ENCODE measurements at regions of chr10 and their contacts with region 1.

Region 1: DNA sequence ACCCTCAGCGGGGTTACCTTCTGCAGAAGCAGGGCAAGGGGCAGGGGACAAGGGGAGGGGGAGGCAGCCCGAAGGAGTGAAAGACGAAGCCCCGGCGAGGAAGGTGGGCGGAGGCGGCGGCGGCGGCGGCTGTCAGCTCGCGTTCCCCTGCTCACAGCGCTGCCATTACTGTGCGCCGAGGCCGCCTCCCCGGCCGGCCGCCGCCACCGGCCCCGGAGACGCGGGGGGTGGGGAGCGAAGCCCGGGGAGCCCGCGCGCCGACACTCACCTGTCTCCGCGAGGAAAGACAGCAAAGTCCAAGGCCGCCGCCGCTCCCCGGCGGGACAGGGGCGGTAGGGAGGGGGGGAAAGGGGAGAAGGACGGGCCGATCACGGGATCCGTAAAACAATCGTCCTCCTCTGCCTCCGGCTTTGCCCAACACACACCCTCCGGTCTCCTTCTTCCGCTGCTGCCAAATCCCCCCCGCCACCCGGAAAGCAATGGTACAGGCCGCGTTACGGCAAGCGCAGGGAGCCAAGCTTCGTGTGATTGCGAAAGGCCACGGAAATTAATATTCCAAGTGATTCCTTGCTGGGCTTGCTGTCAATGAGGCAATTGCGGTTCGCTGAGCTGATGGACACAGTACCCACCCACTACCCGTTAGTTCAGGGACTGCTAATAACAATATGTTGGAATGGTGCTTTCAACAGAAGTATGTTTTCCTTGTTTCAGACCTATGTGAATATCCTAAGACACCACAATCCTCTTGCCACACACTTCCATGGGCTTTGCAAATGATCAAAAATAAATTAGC is at the start of gene CUL2:
- DNase-seq: peak; percentile 94
- CTCF ChIP-seq: no peak

Region 2: DNA sequence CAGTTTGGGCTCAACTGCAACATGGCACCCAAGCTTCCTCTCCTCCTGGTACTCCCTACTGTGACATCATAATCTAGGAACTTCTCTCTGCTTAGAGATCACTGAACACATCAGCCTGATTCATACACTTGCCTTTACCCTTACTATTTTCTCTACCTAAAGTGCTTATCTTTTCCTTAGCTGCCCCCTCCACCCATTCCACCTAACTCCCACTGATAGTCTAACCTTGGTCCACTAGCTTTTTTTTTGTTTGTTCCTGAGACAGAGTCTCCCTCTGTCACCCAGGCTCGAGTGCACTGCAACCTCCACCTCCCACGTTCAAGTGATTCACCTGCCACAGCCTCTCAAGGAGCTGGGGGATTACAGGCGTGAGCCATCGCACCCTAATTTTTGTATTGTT is 16.1 kb before region 1 on chr10:
- CTCF ChIA-PET with region 1: interaction called, 5 read pairs
- POLR2A ChIA-PET with region 1: interaction called, 11 read pairs
- DNase-seq: no peak
- CTCF ChIP-seq: no peak

Region 3: GRCh38 chr10:35109141-35109540 is 18.8 kb after region 1 on chr10:
- CTCF ChIA-PET with region 1: no interaction called
- POLR2A ChIA-PET with region 1: no interaction called
- DNase-seq: no peak
- CTCF ChIP-seq: no peak

Region 4: GRCh38 chr10:35188954-35189353 is 98.6 kb after region 1 on chr10:
- CTCF ChIA-PET with region 1: no interaction called
- POLR2A ChIA-PET with region 1: no interaction called
- DNase-seq: no peak
- CTCF ChIP-seq: no peak

Measured in GM10248 (cell line).